WTC11 (cell line): ENCODE measurements at regions of chr17 and their contacts with region 1.

Region 1: GRCh38 chr17:76153640-76154039 is 12.6 kb upstream of the FOXJ1 start:
- DNase-seq: no peak
- ATAC-seq: peak; percentile 28; the same call in 1 of the 2 replicates
- H3K4me3 Mint-ChIP-seq: no peak overlapping the region
- H3K27ac Mint-ChIP-seq: no peak overlapping the region
- H3K4me1 Mint-ChIP-seq: peaks cover 32% of the 10 kb centered on the region
- H3K27me3 Mint-ChIP-seq: no peaks in the 10 kb centered on the region
- CTCF ChIP-seq: no peak

Region 2: DNA sequence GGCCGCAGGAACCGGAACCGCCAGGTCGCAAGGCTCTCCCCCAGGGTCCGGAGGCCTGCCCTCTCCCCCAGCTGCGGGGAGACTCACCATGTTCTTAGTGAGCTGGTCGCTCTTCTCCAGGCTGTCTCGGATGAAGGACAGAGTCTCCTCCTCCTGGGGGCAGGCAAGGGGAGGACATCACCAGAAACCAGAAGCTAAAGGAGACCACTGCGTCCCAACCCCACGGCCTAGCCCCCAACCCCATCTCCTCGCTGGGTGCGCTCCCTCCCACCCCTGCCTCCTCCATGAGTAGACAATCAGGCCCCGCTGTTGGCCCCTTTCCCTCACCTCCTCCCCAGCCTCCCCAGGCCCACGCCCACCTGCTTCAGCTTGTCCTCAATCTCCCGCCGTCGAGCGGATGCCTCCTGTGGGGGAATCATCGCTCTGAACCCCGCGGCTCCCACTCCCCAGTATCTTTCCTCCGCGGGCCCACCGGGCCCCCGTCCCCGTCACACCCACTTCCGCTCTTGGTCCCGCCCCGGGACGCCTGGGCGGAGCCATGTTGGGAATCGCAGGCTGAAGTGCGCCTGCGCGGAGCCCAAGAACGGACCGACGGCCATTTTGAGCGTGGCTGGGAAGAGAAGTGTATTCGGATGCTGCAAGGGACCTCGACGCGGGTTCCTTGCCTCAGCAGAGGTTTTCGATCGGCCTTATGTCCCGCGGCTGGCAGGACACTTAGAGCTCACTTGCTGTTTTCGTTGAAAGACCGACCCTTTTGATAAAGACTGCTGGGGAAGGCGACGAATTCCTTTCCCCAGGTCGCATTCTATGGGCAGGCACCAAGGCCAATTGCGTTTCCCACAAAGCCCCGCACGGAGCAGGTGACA is 50.1 kb before region 1 on chr17 and contains the start of gene EXOC7:
- CTCF ChIA-PET with region 1: interaction called, 11 read pairs
- POLR2A ChIA-PET with region 1: no interaction called
- DNase-seq: peak; percentile 92
- ATAC-seq: peak; percentile 72
- H3K4me3 Mint-ChIP-seq: peak within 1 kb of the TSS; percentile 88
- H3K27ac Mint-ChIP-seq: peak within 1 kb of the TSS; percentile 97
- H3K4me1 Mint-ChIP-seq: peaks cover 28% of the 10 kb centered on the region
- H3K27me3 Mint-ChIP-seq: no peaks in the 10 kb centered on the region; the same call in 1 of the 2 replicates
- CTCF ChIP-seq: no peak
- total RNA-seq, gene EXOC7: 90.0 to 126 TPM (median 96.2 TPM) in 3 replicates

Region 3: GRCh38 chr17:76141212-76142038 is 12.2 kb before region 1 on chr17 and contains the start of gene FOXJ1:
- CTCF ChIA-PET with region 1: interaction called, 18 read pairs
- POLR2A ChIA-PET with region 1: no interaction called
- DNase-seq: peak; percentile 97
- ATAC-seq: peak; percentile 61
- H3K4me3 Mint-ChIP-seq: peak within 1 kb of the TSS; percentile 82
- H3K27ac Mint-ChIP-seq: no peak within 1 kb of the TSS
- H3K4me1 Mint-ChIP-seq: peaks cover 81% of the 10 kb centered on the region
- H3K27me3 Mint-ChIP-seq: peaks cover 67% of the 10 kb centered on the region
- CTCF ChIP-seq: no peak
- total RNA-seq, gene FOXJ1: 6.2 to 11.8 TPM (median 6.8 TPM) in 3 replicates

Region 4: GRCh38 chr17:76176701-76177574 is 23.3 kb after region 1 on chr17:
- CTCF ChIA-PET with region 1: interaction called, 53 read pairs
- POLR2A ChIA-PET with region 1: no interaction called
- DNase-seq: no peak
- ATAC-seq: peak; percentile 51
- H3K4me3 Mint-ChIP-seq: no peak overlapping the region
- H3K27ac Mint-ChIP-seq: no peak overlapping the region
- H3K4me1 Mint-ChIP-seq: peaks cover 18% of the 10 kb centered on the region
- H3K27me3 Mint-ChIP-seq: peaks cover 4% of the 10 kb centered on the region; the same call in 1 of the 2 replicates
- CTCF ChIP-seq: no peak

Region 5: DNA sequence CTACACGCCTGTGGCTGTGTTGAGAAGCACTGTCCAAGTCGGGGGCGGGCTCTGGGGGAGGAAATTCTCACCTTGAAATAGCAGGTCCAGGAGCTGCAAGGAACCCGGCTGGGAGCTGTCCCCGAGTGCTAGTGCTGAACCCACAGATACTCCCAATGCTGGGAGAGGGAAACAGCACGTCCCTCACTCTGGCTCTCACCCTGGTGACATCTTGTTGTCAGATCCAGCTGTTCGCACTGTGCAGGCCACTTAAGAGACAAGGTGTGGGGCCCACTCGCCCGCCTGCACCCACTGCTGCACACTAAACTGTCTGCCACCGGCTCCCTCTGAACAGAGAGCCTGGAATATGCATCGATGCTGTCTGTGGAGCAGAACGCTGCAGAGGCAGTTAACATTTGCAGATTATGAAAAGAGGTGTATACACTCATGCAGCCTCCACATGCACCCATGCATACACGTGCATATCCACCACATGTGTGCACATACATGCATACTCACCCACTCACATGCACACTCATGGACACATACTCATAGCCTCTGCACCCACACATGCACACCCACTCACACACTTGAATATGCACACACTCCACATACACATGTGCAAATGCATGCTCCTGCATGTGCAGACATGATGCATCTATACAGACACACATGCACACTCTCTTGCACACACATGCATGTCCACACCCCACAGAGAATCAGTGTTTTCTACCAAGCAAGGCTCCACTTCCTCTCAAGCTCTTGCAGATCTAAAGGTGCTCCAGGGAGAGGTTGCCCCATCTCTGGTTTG is 756.5 kb after region 1 on chr17:
- CTCF ChIA-PET with region 1: no interaction called
- POLR2A ChIA-PET with region 1: no interaction called
- DNase-seq: peak; percentile 92
- ATAC-seq: peak; percentile 83
- H3K4me3 Mint-ChIP-seq: no peak overlapping the region
- H3K27ac Mint-ChIP-seq: 0 out of 2 replicates have a peak overlapping the region, but pooled peaks have one; percentile 7
- H3K4me1 Mint-ChIP-seq: peaks cover 17% of the 10 kb centered on the region
- H3K27me3 Mint-ChIP-seq: no peaks in the 10 kb centered on the region
- CTCF ChIP-seq: no peak